HepG2 (cell line): ENCODE measurements at regions of chr9 and their contacts with region 1.

Region 1: GRCh38 chr9:128159784-128160602 is at the start of gene BBLN:
- DNase-seq: peak; percentile 84
- ATAC-seq: peak; percentile 88
- H3K4me3 ChIP-seq: peak within 1 kb of the TSS; percentile 71 to 97 (median 92)
- H3K27ac ChIP-seq: peak within 1 kb of the TSS; percentile 71
- H3K4me1 ChIP-seq: peaks cover 16% of the 10 kb centered on the region
- H3K27me3 ChIP-seq: 0 out of 5 replicates have a peak, but pooled peaks cover 0 to 3% of the 10 kb centered on the region in 2 experiments
- CTCF ChIP-seq: 0 out of 2 replicates have a peak, but pooled peaks have one; percentile 12
- EP300 ChIP-seq: peak in 1 of 2 experiments; percentile 18; a peak in 1 of 4 replicates
- POLR2A ChIP-seq: peak; percentile 65 to 77
- RAD21 ChIP-seq: 0 out of 2 replicates have a peak, but pooled peaks have one; percentile 6
- total RNA-seq, gene BBLN: 22.2 and 33.1 TPM in 2 replicates

Region 2: DNA sequence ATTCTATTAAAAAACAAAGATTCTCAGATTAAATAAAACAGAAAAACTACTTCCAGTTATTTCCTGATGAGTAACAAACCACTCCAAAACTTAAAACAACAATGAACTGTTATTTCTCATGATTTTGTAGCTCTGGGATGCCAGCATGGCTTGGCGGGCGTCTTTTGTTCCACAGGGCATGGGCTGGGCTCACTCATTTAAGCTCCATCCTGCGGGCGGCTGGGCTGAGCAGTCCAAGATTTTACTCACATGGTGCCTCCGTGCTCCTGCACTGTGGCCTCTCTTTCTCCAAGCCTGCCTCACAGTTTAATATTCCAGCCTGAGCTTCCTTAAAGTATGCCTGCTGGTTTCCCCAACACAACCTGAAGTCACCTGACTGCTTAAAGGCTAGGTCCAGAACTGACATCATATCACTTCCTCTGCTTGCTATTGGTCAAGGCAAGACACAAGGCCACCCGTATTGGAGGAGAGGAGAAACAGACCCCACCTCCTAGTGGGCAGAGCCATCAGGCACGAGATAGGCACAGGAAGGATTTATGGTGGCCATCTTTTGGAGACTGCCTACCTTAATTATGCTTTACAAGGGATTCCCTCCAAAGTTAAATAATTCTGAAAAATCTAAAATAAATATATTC is 1396.7 kb before region 1 on chr9:
- CTCF ChIA-PET with region 1: no interaction called
- POLR2A ChIA-PET with region 1: no interaction called
- in situ Hi-C with region 1: no loop called
- intact Hi-C with region 1: no loop called
- DNase-seq: no peak
- ATAC-seq: no peak
- H3K4me3 ChIP-seq: no peak overlapping the region
- H3K27ac ChIP-seq: no peak overlapping the region
- H3K4me1 ChIP-seq: no peaks in the 10 kb centered on the region
- H3K27me3 ChIP-seq: peaks cover 2 to 7% of the 10 kb centered on the region in 2 experiments; a peak in 1 of 5 replicates
- CTCF ChIP-seq: no peak
- EP300 ChIP-seq: no peak
- POLR2A ChIP-seq: no peak
- RAD21 ChIP-seq: no peak

Region 3: DNA sequence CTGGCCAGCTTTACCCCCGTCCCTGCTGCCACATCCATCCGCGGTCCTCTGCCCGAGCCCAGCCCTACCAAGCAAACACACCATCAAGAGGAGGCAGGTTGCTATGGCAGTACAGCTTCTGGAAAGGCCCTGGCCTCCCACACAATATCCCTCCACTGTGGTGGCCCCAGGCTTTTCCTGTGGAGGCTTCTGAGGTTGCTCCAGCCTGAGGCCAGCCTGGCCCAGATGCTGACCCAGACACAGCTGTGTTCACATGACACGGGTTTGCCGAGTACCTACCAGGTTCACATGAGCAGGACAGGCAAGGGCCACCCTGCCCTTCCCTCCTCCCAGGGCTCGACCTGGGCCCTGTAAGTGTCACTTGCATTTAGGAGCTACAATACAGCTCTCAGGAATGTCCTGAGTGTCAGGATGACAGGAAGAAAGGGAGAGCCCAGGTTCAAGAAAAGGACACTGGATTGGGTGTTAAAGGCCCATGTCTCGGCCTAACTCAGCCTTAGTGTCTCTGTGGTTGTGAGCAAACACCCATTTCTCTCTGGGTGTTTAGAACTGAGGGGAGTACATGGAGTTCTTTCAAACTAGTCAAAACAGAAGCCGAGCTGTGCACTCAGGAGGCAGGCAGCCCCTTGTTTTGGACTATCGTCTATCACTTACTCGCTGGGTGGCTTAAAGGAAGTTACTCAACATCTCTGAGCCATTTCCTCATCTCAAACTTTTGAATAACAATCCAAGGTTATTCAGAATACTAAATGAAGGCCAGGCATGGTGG is 133.0 kb before region 1 on chr9:
- CTCF ChIA-PET with region 1: no interaction called
- POLR2A ChIA-PET with region 1: no interaction called
- in situ Hi-C with region 1: no loop called
- intact Hi-C with region 1: no loop called
- DNase-seq: no peak
- ATAC-seq: peak; percentile 37
- H3K4me3 ChIP-seq: peak overlapping the region in 1 of 3 experiments; percentile 14; a peak in 1 of 6 replicates
- H3K27ac ChIP-seq: no peak overlapping the region
- H3K4me1 ChIP-seq: peaks cover 44% of the 10 kb centered on the region
- H3K27me3 ChIP-seq: peaks cover 2 to 7% of the 10 kb centered on the region in 2 experiments; a peak in 4 of 5 replicates
- CTCF ChIP-seq: no peak
- EP300 ChIP-seq: no peak
- POLR2A ChIP-seq: no peak
- RAD21 ChIP-seq: no peak

Region 4: DNA sequence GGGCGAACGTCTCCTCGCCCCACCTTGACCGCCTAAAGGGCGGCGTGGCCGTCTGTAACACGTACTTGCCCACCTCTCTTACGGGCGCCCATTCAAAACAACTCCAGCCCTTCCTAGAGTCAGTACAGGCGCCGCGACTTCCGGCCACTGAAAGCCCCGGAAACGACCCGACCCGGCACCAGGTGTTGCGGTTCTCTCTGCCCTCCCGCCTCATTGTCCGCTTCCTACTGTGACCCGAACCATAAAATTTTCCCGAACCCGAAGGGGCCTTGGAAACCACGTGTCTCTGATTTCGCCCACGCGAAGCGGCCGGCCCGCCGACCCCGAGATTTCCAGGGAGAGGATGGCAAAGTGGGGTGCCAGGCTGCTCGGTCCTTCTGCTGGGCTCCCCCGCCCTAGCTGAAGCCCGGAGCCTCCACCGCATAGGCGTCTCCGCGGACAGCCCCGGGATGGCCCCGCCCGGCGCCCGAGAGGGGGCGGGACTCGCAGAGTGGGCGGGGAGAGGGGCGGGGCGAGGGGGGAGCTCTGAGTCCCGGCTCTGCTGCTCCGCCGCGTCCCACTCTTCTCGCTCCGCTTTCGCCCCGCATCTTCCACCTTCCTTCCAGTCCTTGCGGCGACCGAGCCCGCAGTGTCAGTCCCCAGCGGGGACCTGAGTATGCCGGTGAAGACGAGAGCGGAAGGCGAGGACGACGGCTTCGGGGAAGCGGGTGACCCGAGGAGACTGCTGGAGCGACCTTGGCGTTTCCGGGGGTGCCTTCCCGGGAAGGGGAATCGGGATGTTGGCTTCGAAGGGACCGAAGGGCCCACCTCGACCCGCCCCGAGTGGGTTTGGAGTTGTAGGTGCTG is 31.8 kb before region 1 on chr9:
- CTCF ChIA-PET with region 1: no interaction called
- POLR2A ChIA-PET with region 1: interaction called, 17 read pairs
- in situ Hi-C with region 1: no loop called
- intact Hi-C with region 1: no loop called
- DNase-seq: peak; percentile 88
- ATAC-seq: peak; percentile 71
- H3K4me3 ChIP-seq: peak overlapping the region; percentile 96 to 99 (median 97)
- H3K27ac ChIP-seq: peak overlapping the region; percentile 99
- H3K4me1 ChIP-seq: peaks cover 56% of the 10 kb centered on the region
- H3K27me3 ChIP-seq: no peaks in the 10 kb centered on the region
- CTCF ChIP-seq: no peak
- EP300 ChIP-seq: no peak
- POLR2A ChIP-seq: peak; percentile 47 to 76; a peak in 3 of 4 replicates
- RAD21 ChIP-seq: no peak; the same call in 1 of the 2 replicates

Region 5: DNA sequence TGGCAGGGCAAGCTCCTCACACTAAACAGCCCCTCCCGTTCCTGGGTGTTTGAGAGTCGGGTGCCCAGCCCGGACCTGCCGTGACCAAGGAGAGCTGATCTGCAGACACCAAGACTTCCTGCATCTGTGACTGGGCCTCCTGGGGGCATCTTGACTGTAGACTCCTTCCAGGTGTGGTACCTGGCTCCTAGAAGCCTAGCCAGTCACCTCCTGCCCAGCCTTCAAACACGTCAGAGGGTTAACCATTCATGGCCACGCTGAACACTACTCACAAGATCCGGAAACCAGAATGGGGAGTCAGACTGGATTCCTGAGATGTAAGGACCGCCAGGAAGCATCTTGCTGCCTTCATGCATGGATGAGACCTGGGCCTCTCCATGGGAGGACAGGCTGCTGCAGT is 14.5 kb before region 1 on chr9:
- CTCF ChIA-PET with region 1: no interaction called
- POLR2A ChIA-PET with region 1: interaction called, 36 read pairs
- in situ Hi-C with region 1: no loop called
- intact Hi-C with region 1: no loop called
- DNase-seq: no peak
- ATAC-seq: no peak
- H3K4me3 ChIP-seq: no peak overlapping the region
- H3K27ac ChIP-seq: no peak overlapping the region
- H3K4me1 ChIP-seq: peaks cover 64% of the 10 kb centered on the region
- H3K27me3 ChIP-seq: peaks cover 3 to 25% of the 10 kb centered on the region in 2 experiments; a peak in 4 of 5 replicates
- CTCF ChIP-seq: no peak
- EP300 ChIP-seq: no peak
- POLR2A ChIP-seq: no peak
- RAD21 ChIP-seq: no peak